Activated CD4-positive, alpha-beta memory T cell treated with anti-CD3 and anti-CD28 coated beads for 36 hours (primary cell): ENCODE measurements at regions of chr6 and their contacts with region 1.

Region 1: DNA sequence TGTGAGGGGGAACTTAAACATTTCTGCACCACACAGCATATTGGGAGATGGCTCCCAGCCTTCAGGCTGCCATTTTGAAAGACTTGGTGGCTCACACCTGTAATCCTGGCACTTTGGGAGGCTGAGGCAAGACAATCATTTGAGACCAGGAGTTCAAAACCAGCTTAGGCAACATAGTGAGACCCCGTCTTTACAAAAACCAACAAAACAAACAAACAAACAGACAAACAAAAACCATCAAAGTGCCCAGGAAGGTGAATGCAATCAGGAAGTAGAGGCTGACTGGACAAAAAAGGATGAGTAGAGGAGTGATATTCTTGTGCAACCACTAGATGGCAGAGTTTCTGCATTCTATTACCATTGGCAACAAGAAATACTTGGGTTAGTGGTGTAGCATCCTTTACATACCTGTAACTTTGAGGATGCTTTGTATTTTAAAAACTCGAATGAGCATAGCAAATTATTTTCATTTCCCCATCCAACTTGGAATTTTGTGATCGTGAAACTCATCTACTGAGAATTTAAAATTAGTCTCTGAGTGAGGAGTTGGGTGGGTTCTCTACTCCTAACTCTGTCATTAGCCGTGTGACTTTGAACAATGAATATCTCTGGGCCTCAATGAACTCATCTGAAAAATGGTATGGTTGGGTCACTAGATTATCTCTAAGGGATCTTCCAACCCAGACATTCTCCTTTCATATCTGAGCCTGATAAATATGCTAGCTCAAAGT is 84.4 kb downstream of the CRYBG1 start:
- DNase-seq: no peak
- H3K4me3 Mint-ChIP-seq: no peak overlapping the region
- H3K27ac Mint-ChIP-seq: no peak overlapping the region
- H3K4me1 Mint-ChIP-seq: peaks cover 17% of the 10 kb centered on the region
- H3K27me3 Mint-ChIP-seq: peaks cover 25% of the 10 kb centered on the region

Region 2: DNA sequence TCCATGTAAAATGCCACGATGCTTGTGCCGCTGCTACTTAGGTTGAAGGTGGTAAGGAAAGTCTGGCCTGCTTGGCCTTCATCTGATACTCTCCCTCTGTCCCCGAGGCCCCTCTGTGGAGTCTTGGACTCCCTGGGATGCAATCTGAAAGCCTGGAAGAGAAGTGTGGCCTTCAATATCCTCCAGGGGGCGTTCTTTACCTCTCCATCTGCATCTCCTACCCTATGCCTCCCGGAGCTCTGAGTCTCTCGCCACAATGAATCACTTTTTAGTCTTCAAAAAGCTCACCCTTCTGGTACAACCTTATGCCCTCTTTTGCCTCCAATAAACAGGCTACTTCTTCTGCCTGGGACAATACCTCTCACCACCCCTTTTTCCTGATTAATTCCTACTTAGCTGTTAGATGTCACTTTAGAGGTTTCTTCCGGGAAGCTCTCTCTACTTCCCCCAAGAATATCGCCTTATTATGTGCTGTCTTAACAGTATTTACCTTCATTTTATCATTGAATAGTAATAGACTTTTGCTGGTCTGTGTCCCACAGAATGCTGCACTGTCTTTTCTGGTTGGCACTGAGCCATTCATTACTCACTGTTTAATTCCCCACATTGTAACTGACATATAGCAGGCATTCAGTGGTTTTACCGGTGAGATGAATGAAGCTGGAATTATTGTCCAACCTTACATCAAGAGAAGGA is 105.5 kb before region 1 on chr6:
- CTCF ChIA-PET with region 1: interaction called, 46 read pairs
- POLR2A ChIA-PET with region 1: interaction called, 3 read pairs
- intact Hi-C with region 1: loop called (anchors 1 kb)
- DNase-seq: peak; percentile 63
- H3K4me3 Mint-ChIP-seq: no peak overlapping the region
- H3K27ac Mint-ChIP-seq: no peak overlapping the region
- H3K4me1 Mint-ChIP-seq: peaks cover 3% of the 10 kb centered on the region
- H3K27me3 Mint-ChIP-seq: peaks cover 29% of the 10 kb centered on the region

Region 3: DNA sequence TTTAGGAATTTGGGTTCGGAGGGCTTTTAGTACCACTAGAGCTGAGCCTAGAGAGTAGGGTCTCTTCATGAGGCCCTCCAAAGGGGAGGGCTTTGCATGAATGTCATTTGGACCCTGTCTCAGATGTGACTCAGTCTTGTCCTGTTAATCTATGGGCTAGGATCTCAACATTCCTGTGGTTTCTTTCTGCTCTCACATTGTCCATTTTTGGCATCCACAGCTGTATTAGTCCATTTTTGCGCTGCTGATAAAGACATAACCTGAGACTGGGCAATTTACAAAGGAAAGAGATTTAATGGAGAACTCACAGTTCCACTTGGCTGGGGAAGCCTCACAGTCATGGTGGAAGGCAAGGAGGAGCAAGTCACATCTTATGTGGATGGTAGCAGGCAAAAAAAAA is 23.4 kb before region 1 on chr6:
- CTCF ChIA-PET with region 1: no interaction called
- POLR2A ChIA-PET with region 1: no interaction called
- intact Hi-C with region 1: no loop called
- DNase-seq: no peak
- H3K4me3 Mint-ChIP-seq: no peak overlapping the region
- H3K27ac Mint-ChIP-seq: no peak overlapping the region
- H3K4me1 Mint-ChIP-seq: no peaks in the 10 kb centered on the region
- H3K27me3 Mint-ChIP-seq: peaks cover 2% of the 10 kb centered on the region

Region 4: GRCh38 chr6:106477790-106478189 is 32.8 kb after region 1 on chr6:
- CTCF ChIA-PET with region 1: interaction called, 10 read pairs
- POLR2A ChIA-PET with region 1: no interaction called
- intact Hi-C with region 1: loop called (anchors 2 kb)
- DNase-seq: no peak
- H3K4me3 Mint-ChIP-seq: no peak overlapping the region
- H3K27ac Mint-ChIP-seq: no peak overlapping the region
- H3K4me1 Mint-ChIP-seq: peaks cover 9% of the 10 kb centered on the region
- H3K27me3 Mint-ChIP-seq: no peaks in the 10 kb centered on the region

Region 5: GRCh38 chr6:106629103-106629858 is 184.3 kb after region 1 on chr6 and contains the starts of genes QRSL1 and RTN4IP1:
- CTCF ChIA-PET with region 1: no interaction called
- POLR2A ChIA-PET with region 1: no interaction called
- intact Hi-C with region 1: loop called (anchors 1 kb)
- DNase-seq: peak; percentile 91
- H3K4me3 Mint-ChIP-seq: peak within 1 kb of the TSS; percentile 92
- H3K27ac Mint-ChIP-seq: peak within 1 kb of the TSS; percentile 94
- H3K4me1 Mint-ChIP-seq: peaks cover 15% of the 10 kb centered on the region
- H3K27me3 Mint-ChIP-seq: no peaks in the 10 kb centered on the region
- total RNA-seq, gene QRSL1: 13.2 to 13.9 TPM
- total RNA-seq, gene RTN4IP1: 8.0 to 8.5 TPM

Region 6: DNA sequence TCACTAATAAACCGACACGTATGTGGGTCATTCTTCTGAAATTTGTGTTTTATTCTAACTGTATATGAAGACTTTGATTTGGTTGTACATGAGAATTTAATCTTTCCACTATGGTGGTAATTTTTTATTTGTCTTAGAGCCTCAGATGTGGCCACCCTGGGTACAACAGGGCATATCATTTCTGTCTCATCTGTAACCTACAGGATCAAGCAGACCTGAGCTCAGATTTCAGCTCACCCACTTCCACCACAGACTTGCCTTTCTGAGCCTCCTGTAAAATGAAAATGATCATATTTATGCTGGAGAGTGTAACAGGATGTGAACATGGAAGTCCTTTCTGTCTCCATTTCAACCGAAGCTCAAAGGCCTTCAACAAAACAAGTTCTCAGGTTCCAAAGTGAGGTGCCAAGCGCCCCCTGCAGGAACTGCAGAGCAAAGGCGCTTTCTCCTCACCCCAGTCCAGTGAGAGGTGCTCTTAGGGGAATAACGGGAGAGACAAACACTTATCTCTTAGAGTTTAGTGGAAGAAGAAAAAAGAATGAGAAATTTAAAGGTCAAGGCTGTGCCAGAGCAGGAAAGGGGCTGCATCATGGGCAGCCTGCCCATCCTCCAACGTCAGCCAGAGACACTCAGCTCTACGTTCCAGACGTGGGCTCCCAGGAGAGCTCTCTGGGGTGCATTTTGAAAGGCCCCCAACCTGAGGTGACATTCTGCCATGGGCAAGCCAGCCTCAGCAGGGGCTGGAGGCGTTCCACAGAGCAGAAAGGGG is 552.6 kb after region 1 on chr6:
- CTCF ChIA-PET with region 1: interaction called, 8 read pairs
- POLR2A ChIA-PET with region 1: no interaction called
- intact Hi-C with region 1: loop called (anchors 5 kb)
- DNase-seq: peak; percentile 76
- H3K4me3 Mint-ChIP-seq: no peak overlapping the region
- H3K27ac Mint-ChIP-seq: no peak overlapping the region
- H3K4me1 Mint-ChIP-seq: peaks cover 5% of the 10 kb centered on the region
- H3K27me3 Mint-ChIP-seq: no peaks in the 10 kb centered on the region